Common myeloid progenitor, CD34-positive (primary cell): ENCODE measurements at regions of chr1 and their contacts with region 1.

Region 1: GRCh38 chr1:113835642-113836307 is 23.5 kb upstream of the RSBN1 start:
- DNase-seq: peak; percentile 65 to 81 (median 74)
- H3K4me3 ChIP-seq: peak overlapping the region in 1 of 7 experiments; percentile 45
- H3K27ac ChIP-seq: no peak overlapping the region
- H3K4me1 ChIP-seq: peaks cover 0 to 4% (median 3%) of the 10 kb centered on the region in 4 experiments
- H3K27me3 ChIP-seq: no peaks in the 10 kb centered on the region

Region 2: DNA sequence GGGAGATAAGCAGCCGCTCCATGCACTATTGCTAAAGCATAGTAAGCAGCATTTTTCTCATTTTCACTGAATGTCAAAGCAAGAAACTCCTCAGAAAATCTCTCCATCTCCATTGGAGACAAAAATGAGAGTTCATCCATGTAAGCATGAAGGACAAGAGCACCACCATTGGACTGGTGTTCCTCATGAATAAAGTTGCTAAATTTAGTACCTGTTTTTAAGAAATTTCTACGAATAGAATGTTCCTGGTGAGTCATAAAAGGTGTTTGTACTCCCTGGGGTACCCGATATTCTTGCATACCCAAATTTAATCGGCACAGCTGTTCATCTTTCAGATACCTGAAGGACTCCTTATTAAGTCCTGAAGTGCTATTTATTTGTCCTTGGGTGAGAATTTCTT is 38.3 kb before region 1 on chr1:
- CTCF ChIA-PET with region 1: no interaction called
- POLR2A ChIA-PET with region 1: no interaction called
- DNase-seq: no peak
- H3K4me3 ChIP-seq: no peak overlapping the region
- H3K27ac ChIP-seq: no peak overlapping the region
- H3K4me1 ChIP-seq: no peaks in the 10 kb centered on the region
- H3K27me3 ChIP-seq: no peaks in the 10 kb centered on the region

Region 3: DNA sequence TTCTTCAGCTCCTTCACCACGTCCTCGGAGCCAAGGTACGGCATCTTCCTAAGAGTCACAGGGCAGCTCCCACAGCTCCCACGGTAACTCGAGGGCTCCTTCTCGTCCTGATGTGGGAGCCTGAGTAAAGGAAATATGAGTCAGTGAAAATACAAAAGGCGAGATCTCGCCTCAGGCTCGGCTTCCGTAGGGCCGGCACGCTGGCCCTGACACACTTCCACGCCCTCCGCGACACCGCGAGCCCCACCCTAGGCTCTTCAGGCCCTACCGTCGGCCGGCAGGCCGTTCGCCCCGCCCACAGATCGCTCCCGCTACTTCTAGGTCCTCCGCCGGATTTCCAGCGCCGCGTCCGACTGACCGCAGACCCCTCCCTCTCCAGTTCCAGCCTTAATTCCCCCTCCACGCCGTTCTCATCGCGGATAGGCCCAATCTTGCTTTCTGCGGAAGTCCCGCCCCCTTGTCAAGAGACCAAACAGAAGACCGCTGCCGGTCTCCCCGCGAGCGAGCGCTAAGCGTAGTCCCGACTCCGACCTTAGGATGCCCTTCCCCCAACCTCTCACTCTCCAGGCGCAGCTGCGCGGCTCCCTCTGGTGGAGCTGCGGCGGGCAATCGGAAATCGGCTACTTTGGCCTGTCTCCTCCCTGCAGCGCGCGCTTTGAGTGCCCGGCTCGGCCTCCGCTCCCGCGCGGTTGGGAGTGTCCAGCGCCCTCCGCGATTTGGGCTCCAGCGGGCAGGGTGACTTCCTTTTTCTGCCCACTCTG is 69.1 kb after region 1 on chr1 and contains the starts of genes AP4B1 and DCLRE1B:
- CTCF ChIA-PET with region 1: interaction called, 43 read pairs
- POLR2A ChIA-PET with region 1: no interaction called
- DNase-seq: peak; percentile 100
- H3K4me3 ChIP-seq: peak within 1 kb of the TSS; percentile 76 to 100 (median 98)
- H3K27ac ChIP-seq: peak within 1 kb of the TSS; percentile 72 to 90
- H3K4me1 ChIP-seq: peaks cover 13 to 24% (median 16%) of the 10 kb centered on the region in 4 experiments
- H3K27me3 ChIP-seq: no peaks in the 10 kb centered on the region

Region 4: DNA sequence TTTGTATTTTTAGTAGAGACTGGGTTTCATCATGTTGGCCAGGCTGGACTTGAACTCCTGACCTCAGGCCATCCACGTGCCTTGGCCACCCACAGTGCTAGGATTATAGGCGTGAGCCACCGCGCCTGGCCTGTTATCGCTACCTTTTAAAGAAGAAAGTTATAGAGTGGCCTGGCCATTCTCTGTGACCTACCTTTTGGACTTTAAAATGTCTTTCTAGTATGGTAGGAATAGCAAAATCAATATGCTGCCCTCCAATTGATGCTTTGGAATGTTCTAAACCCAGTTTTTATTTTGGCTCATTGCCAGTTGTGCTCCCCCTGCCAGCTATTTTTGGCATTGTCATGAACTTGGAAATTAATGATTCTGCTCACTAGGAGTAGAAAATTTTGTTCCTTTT is 113.2 kb after region 1 on chr1:
- CTCF ChIA-PET with region 1: interaction called, 34 read pairs
- POLR2A ChIA-PET with region 1: no interaction called
- DNase-seq: peak; percentile 54 to 69 (median 55)
- H3K4me3 ChIP-seq: no peak overlapping the region
- H3K27ac ChIP-seq: peak overlapping the region in 1 of 2 experiments; percentile 5
- H3K4me1 ChIP-seq: peaks cover 26 to 38% (median 31%) of the 10 kb centered on the region in 4 experiments
- H3K27me3 ChIP-seq: no peaks in the 10 kb centered on the region

Region 5: DNA sequence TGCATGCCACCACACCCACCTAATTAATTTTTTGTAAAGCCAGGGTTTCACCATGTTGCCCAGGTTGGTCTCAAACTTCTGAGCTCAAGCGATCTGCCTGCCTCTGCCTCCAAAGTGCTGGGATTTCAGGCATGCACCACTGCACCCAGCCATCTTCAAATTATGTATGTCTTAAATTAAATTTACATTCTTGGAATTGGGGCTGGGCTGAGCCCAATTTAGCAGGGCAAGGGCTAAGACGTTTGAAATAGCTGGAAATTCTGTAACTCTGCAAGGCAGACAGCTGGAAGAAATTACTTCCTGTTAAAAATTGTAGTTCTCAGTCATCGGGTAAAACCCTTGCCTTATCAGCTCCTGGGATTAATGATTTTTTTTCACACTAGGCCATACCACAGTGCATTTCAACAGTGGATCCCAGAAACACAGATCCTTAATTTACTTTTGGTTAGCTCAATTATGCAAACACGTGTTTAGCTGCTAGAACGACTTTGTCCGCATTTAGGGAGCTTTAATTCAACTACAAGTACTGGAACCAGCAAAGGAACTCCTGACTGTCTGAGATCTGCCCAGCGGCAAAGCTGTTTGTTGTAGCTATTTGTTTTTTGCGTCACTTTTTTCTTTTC is 226.8 kb after region 1 on chr1:
- CTCF ChIA-PET with region 1: no interaction called
- POLR2A ChIA-PET with region 1: no interaction called
- DNase-seq: peak in 1 of 3 donors; percentile 12
- H3K4me3 ChIP-seq: no peak overlapping the region
- H3K27ac ChIP-seq: no peak overlapping the region
- H3K4me1 ChIP-seq: no peaks in the 10 kb centered on the region
- H3K27me3 ChIP-seq: peaks cover 0 to 2% (median 0%) of the 10 kb centered on the region in 5 experiments